Posterior vena cava (tissue), 2 donors: ENCODE measurements at regions of chr4 and their contacts with region 1.

Region 1: GRCh38 chr4:5124876-5125275 is 73.6 kb downstream of the STK32B start:
- DNase-seq: no peak

Region 2: DNA sequence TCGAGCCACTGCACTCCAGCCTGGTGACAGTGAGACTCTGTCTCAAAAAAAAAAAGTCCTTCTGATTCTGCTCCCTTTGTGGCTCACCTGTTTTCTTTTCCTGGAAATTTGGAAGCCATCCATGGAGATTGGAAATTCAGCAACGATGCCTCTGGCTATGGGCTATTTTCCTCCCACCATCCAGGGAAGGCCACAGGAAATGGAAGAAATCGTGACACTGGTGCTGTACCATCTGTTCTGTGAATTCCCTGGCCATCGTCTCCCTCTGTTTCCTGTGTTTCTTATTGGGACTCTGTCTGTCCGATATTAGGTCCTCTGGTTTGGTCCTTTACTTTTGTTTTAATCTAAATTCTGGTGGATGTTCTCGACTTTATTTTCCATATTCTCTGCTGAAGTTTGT is 1388.1 kb before region 1 on chr4:
- intact Hi-C with region 1: loop called in 1 of 2 experiments (anchors 5 kb)
- DNase-seq: no peak

Region 3: GRCh38 chr4:5101571-5101970 is 23.3 kb before region 1 on chr4:
- intact Hi-C with region 1: no loop called
- DNase-seq: no peak

Region 4: DNA sequence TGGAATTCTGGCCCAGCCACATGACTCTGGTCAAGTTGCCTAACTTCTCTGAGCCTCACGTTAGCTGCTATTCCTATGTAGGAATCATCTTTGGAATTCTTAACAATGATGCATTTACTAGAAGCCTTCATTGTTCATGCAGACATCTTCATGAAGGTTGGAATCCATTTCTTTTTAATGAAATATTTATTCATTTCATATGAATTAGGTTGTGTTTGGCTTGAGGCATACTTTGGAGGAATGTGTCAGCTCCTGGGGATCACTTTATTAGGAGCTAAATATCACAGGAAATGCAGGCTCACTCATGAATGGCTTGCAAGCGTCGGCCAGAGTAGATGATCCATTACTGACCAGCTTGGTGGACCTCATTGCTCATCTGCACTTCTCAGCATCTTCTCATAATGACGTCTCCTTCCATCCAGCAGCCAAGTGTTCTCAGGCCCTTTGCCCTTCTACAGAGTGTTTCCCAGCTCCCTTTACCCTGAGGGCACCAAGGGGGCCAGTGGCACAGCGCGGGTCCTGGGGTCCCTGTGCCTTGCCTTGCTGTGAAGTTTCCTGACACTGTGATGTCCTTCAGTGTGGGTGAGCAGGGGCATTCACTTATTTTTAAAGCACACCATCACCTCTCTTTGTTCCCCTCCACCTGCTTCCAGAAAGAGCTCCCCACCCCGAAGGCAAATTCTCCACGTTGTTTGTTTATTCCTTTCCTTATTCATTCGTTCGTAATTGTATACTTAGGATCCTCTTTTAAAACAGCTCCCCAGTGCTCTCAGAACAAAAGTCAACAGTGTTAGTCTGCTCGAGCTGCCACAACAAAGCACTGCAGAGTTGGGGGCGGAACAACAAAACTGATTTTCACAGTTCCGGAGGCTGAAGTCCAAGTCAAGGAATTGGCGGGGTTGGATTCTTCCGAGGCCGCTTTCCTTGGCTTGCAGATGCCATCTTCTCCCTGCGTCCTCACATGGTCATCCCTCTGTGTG is 33.2 kb after region 1 on chr4:
- intact Hi-C with region 1: loop called in 1 of 2 experiments (anchors 1 kb)
- DNase-seq: no peak

Region 5: DNA sequence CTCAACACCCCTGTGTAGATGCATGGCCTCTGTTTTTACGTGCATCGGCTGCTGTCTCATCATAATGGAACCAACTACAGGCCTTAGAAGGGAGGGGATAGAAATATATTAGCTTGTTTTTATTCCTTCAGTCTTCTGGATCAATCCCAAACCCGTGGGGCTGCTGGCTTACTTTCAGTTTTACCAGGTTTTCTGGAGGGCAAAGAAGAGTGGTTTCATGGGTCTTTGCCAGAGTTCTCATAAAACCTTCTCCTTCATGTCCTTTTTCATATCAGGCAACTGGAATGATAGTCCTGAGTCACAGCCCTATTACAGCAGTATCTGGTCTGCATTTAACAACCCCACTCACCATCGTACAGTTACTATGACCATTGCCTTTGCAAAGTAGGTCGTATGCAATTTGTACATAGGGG is 1313.0 kb after region 1 on chr4:
- intact Hi-C with region 1: no loop called
- DNase-seq: peak; percentile 25